ENCODE measurements at regions of chr22 and their contacts with region 1.

Region 1: DNA sequence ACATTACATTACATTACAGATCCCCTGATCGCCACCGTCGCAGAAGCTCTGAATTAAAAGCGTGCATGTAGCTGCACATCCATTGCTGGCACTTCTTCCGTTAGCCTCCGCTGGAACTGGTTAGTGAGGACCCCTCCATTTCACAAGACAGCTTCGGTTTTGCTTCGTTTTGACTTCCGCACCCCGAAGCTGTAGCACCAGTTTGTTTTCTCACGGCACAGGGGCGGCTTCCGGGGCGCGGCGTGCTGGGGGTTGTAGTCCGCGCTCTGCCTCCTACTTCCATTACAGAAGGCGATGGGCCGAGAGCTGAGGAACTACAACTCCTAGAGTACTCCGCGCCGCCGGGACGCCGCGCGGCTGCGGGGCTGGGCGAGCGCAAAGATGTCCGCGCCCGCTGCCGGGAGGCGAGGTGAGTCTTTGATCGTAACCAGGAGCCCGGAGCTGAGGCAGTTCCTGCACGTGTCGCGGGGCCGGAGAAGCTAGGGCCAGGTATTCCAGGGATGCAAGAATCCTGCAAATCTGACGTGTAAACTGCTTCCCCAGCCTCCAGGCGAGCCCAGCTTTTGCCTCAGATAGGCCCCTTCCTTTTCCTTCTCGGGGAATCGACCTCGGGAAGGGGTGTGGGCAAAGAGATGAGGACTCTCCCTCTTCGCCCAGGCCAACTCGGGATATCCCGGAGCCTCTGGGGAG is at the start of gene PEX26:
- DNase-seq: peak; percentile 97
- ATAC-seq: peak; percentile 98
- H3K4me3 Mint-ChIP-seq: peak within 1 kb of the TSS; percentile 89
- H3K27ac Mint-ChIP-seq: peak within 1 kb of the TSS; percentile 98
- H3K4me1 Mint-ChIP-seq: peaks cover 46% of the 10 kb centered on the region
- H3K27me3 Mint-ChIP-seq: no peaks in the 10 kb centered on the region
- total RNA-seq, gene PEX26: 50.7 to 58.0 TPM

Region 2: GRCh38 chr22:17158568-17159503 is 918.9 kb before region 1 on chr22 and contains the start of gene HDHD5:
- CTCF ChIA-PET with region 1: no interaction called
- POLR2A ChIA-PET with region 1: no interaction called
- intact Hi-C with region 1: loop called in 1 of 2 experiments (anchors 1 kb)
- DNase-seq: peak; percentile 94
- ATAC-seq: peak; percentile 82
- H3K4me3 Mint-ChIP-seq: peak within 1 kb of the TSS; percentile 84
- H3K27ac Mint-ChIP-seq: peak within 1 kb of the TSS; percentile 87
- H3K4me1 Mint-ChIP-seq: peaks cover 32% of the 10 kb centered on the region
- H3K27me3 Mint-ChIP-seq: no peaks in the 10 kb centered on the region
- total RNA-seq, gene HDHD5: 51.6 to 69.0 TPM

Region 3: DNA sequence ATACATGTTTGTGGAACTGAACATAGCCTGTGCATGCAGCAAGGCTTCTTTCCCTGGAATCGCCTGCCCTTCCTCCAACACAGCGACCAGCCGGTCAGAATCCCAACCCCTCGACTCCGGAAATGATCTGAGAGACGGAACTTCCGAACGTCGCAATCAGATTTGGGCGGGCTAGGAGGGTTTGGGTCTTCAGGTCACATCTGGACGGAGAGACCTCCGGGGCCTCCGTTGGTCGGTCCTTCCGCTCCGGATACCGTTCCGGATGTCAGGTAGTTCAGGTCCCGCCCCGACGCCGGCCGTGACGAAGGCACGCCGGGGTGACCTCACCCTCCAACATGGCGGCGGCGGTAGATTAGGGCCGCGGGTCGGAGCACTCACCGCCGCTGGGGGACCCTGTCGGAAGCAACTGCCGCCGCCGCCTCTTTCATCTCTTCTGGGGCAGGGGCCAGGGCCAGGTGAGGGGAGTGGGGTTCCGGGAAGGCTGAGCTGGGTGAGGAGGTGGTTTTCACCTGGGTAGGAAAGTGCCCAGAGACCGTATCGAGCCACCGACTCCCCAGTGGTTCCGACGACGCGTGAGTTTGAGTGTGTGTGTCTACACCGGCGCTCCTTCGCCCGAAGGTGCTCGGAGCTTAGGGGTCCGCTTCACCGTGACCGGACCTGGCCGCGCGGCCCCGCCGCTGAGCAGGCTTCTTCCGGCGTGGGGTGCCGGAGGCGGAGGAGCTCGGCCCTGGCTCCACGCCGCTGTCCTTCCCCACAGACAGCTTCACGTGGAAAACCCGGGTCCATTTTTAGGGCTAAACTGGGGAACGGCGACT is 439.1 kb before region 1 on chr22 and contains the start of gene BCL2L13:
- CTCF ChIA-PET with region 1: interaction called, 3 read pairs
- POLR2A ChIA-PET with region 1: no interaction called
- intact Hi-C with region 1: loop called (anchors 1 to 2 kb)
- DNase-seq: peak; percentile 94
- ATAC-seq: peak; percentile 96
- H3K4me3 Mint-ChIP-seq: peak within 1 kb of the TSS; percentile 88
- H3K27ac Mint-ChIP-seq: peak within 1 kb of the TSS; percentile 95
- H3K4me1 Mint-ChIP-seq: peaks cover 24% of the 10 kb centered on the region
- H3K27me3 Mint-ChIP-seq: no peaks in the 10 kb centered on the region
- total RNA-seq, gene BCL2L13: 34.1 to 34.5 TPM

Region 4: GRCh38 chr22:17694193-17694592 is 383.6 kb before region 1 on chr22:
- CTCF ChIA-PET with region 1: no interaction called
- POLR2A ChIA-PET with region 1: no interaction called
- intact Hi-C with region 1: no loop called
- DNase-seq: no peak
- ATAC-seq: no peak
- H3K4me3 Mint-ChIP-seq: no peak overlapping the region
- H3K27ac Mint-ChIP-seq: no peak overlapping the region
- H3K4me1 Mint-ChIP-seq: peaks cover 5% of the 10 kb centered on the region
- H3K27me3 Mint-ChIP-seq: no peaks in the 10 kb centered on the region

Region 5: DNA sequence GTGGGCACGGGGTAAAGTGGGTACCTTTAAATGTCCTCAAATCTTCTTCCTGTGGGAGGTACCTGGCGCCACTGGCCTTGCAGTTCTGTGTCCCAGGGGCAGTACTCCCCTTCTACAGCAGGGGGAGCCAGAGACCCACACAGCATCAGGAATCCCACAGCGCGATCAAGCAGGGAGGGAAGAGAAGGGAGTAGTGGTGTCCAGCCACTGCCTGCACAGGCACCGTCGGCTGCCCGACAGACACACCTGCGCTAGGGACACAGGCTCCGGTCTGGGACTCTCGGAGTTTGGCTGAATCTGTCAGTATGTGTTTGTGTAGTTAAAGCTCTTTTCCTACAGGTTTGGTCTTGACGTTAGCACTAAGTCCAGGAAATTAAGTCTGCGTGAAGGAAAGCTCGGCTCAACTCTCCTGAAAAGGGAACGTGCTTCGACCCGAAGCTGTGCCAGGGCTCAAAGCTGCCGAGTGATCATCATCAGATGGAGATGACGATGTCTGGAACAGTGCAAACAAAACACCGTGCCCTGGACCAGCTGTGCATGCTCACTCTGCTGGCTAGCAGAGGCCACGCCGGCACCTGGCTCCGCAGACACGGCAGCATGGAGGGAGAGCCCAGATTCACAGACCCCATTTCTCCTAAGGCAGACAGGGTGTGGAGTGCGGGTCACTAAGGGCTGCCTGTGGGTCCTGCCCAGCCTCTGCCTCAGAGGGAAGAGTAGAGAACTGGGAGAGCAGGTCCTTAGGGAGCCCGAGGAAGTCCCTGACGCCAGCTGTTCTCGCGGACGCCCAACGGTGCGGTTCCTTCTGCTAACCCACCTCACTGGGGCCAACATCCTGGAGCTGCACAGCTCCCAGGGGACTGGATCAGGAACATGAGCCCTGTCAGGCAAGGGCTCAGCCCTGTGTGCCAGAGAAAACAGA is 247.5 kb before region 1 on chr22:
- CTCF ChIA-PET with region 1: interaction called, 124 read pairs
- POLR2A ChIA-PET with region 1: no interaction called
- intact Hi-C with region 1: loop called (anchors 1 kb)
- DNase-seq: peak; percentile 88
- ATAC-seq: peak; percentile 98
- H3K4me3 Mint-ChIP-seq: no peak overlapping the region
- H3K27ac Mint-ChIP-seq: no peak overlapping the region
- H3K4me1 Mint-ChIP-seq: peaks cover 7% of the 10 kb centered on the region
- H3K27me3 Mint-ChIP-seq: no peaks in the 10 kb centered on the region

Region 6: GRCh38 chr22:18104566-18104965 is 26.8 kb after region 1 on chr22:
- CTCF ChIA-PET with region 1: interaction called, 11 read pairs
- POLR2A ChIA-PET with region 1: interaction called, 11 read pairs
- intact Hi-C with region 1: loop called in 1 of 2 experiments (anchors 1 kb)
- DNase-seq: no peak
- ATAC-seq: no peak
- H3K4me3 Mint-ChIP-seq: no peak overlapping the region
- H3K27ac Mint-ChIP-seq: no peak overlapping the region
- H3K4me1 Mint-ChIP-seq: peaks cover 54% of the 10 kb centered on the region
- H3K27me3 Mint-ChIP-seq: peaks cover 14% of the 10 kb centered on the region